HEK293T (cell line): ENCODE measurements at regions of chr11 and their contacts with region 1.

Region 1: GRCh38 chr11:66408488-66409214 is 12.2 kb upstream of the NPAS4 start:
- DNase-seq: peak; percentile 90

Region 2: DNA sequence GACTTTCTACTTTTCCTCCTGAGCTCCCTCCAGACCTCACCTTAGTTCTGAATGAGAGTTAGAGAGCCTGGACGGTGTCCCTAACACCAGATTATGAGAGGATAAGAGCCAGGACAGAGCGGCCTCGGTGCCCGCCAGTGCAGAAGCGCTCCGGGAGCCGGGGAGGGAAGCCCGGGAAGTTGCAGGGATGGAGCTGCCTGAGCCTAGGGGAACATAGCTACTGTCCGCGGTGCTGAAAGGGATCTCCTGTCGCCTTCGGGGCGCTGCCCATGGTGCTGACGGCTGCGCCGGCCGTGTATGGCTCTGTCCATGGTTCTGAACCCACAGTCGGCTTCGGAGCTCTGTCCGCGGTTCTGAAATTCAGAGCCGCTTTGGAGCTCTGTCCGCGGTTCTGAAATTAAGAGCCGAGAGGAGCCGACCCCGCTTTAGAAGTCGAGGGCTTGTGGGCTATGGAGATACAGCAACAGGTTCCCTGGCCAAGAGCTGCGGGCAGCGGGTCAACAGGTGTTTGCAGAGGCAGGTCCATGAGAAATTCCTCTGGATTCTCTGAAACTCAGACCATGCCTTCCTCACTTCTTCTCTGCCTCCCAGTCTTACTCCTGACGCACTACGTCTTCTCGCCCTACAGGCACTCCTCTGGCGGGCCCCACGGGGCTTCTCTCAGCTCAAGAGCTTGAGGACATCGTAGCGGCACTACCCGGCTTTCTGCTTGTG is 13.0 kb after region 1 on chr11:
- CTCF ChIA-PET with region 1: interaction called, 12 read pairs
- POLR2A ChIA-PET with region 1: interaction called, 3 read pairs
- DNase-seq: peak; percentile 90

Region 3: GRCh38 chr11:66530927-66531709 is 122.5 kb after region 1 on chr11:
- CTCF ChIA-PET with region 1: no interaction called
- POLR2A ChIA-PET with region 1: no interaction called
- DNase-seq: no peak